ENCODE measurements at regions of chr20 and their contacts with region 1.

Region 1: GRCh38 chr20:8853805-8854338 is 215.0 kb upstream of the PLCB4 start:
- DNase-seq: peak in 1 of 2 donors; percentile 48
- ATAC-seq: peak; percentile 81 to 91 (median 84)
- H3K4me3 ChIP-seq: peak overlapping the region in 6 of 10 donors; percentile 4 to 37 (median 18)
- H3K27ac ChIP-seq: peak overlapping the region; percentile 7 to 77 (median 60)
- H3K4me1 ChIP-seq: peaks cover 0 to 34% (median 20%) of the 10 kb centered on the region in 9 donors
- H3K27me3 ChIP-seq: no peaks in the 10 kb centered on the region
- CTCF ChIP-seq: peak; percentile 83 to 93 (median 90)

Region 2: DNA sequence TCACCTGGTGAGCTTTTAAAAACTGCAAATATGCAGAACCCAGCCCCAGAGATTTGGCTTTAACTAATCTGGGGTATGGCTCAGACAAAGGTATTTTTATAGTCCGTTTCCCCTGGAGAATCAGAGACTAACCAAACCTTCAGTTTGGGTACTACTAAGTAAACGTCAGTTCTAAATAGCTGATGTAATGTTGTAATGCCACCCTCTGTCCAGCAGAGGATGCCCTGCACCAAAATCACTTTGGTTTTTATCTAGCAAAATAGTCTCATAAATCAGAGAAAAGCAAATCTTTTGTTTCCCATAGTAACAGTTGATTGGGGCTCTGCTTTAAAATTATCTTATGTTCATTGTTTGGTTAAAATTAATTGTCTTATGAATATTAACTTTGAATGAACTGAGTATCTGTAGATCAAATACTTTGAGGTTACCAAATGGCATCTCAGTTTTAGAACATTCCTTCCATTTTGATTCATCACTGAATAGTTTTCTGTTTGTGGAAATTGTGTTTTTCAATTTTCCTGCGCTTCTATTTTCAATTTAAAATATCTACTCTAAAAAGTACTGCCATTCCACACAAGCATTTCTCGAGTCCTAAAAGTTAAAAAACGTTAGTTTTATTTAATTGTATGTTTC is 63.3 kb before region 1 on chr20:
- intact Hi-C with region 1: loop called in 3 of 10 experiments (anchors 5 to 10 kb)
- DNase-seq: peak in 1 of 2 donors; percentile 19
- ATAC-seq: no peak
- H3K4me3 ChIP-seq: no peak overlapping the region
- H3K27ac ChIP-seq: no peak overlapping the region
- H3K4me1 ChIP-seq: peaks cover 0 to 10% (median 3%) of the 10 kb centered on the region in 9 donors
- H3K27me3 ChIP-seq: no peaks in the 10 kb centered on the region
- CTCF ChIP-seq: peak; percentile 91 to 98 (median 94)

Region 3: DNA sequence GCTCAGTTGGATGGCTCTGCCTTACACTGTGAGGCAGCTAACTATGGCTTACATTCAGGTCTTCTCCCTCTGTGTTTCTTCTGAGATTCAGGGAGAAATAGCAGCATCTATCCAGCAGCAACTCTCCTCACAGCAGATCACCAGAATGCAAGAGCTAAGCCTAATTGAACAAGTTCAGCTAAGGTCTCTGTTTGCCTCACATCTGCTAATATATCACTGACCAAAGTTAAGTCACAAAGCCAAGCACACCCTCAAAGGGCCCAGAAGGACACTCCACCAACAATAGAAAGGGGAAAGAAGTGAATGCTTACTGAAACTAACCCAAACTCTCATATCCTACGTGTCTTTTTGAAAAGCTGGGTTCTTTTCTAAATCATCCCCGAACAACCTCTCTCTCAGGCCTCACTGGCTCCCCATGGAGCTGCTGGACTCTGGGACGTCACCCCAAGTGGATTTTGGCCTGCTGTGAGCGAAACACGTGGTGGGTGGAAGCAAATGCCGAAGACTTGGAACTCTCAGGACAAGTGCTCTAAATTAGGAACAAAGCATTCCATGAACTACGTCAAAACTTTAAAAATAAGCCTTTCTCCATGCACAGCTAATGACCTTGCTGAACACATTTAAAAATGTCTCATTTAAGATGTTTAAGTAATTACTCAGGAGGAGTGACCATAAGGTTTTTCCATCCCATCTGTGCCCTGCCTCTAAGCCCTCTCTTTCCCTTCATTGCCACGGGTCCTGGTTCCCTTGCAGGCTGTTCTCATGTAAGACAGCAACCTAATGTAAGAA is 47.6 kb after region 1 on chr20:
- intact Hi-C with region 1: loop called in 1 of 10 experiments (anchors 1 kb)
- DNase-seq: peak; percentile 42 to 84
- ATAC-seq: peak; percentile 80 to 97 (median 94)
- H3K4me3 ChIP-seq: no peak overlapping the region
- H3K27ac ChIP-seq: peak overlapping the region; percentile 3 to 81 (median 68)
- H3K4me1 ChIP-seq: peaks cover 4 to 35% (median 19%) of the 10 kb centered on the region in 9 donors
- H3K27me3 ChIP-seq: no peaks in the 10 kb centered on the region
- CTCF ChIP-seq: no peak

Region 4: DNA sequence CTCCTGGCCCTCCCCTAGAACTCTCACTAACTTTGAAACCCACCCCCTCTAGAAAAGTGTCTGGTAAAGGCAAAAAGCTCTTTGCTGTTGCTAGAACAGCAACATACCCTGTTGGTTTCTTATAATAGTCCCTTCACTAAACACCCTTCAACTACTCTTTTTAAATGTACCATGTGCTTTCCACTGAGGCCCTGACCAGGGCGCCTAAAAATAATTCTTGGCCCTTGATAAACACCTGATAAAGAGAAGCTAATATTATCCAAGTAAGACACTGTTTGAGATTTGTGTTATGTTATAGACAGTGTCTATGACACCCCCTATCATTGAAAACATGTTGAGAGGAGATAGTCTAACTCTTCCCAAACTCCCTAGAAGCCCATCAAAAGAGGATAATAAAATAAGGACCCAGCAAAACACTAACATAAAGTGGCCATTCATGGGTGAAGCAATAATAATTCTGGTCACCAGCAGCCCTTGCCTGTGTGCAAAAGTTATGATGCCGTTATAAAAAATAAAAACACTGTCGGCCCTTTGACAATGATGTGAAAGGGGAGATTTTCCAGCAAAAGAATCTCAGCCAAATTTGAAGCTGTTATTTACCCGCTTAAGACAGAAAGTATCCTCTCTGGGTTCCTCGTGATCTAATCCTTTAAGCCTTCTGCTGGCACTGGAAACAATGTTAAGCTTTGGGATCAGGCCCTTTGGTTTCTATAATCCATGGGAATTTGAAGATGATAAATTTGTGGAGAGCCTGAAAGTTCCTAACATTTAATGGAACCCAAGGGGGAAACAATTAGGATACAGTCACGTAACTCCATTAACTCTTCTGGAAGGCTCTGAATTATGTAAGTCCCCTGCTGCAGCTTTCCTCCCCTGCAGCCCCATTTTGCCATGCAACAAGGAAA is 92.4 kb after region 1 on chr20:
- intact Hi-C with region 1: loop called in 2 of 10 experiments (anchors 5 kb)
- DNase-seq: no peak
- ATAC-seq: peak; percentile 47 to 86 (median 72)
- H3K4me3 ChIP-seq: no peak overlapping the region
- H3K27ac ChIP-seq: peak overlapping the region in 9 of 10 donors; percentile 0 to 75 (median 49)
- H3K4me1 ChIP-seq: peaks cover 2 to 42% (median 22%) of the 10 kb centered on the region in 9 donors
- H3K27me3 ChIP-seq: no peaks in the 10 kb centered on the region
- CTCF ChIP-seq: no peak

Region 5: GRCh38 chr20:9172851-9173250 is 319.0 kb after region 1 on chr20:
- intact Hi-C with region 1: loop called in 6 of 10 experiments (anchors 10 kb)
- DNase-seq: no peak
- ATAC-seq: peak; percentile 13 to 76 (median 58)
- H3K4me3 ChIP-seq: no peak overlapping the region
- H3K27ac ChIP-seq: peak overlapping the region in 2 of 10 donors; percentile 23 to 45
- H3K4me1 ChIP-seq: peaks cover 4 to 41% (median 24%) of the 10 kb centered on the region in 9 donors
- H3K27me3 ChIP-seq: no peaks in the 10 kb centered on the region
- CTCF ChIP-seq: peak in 8 of 9 donors; percentile 20 to 68 (median 44)

Region 6: GRCh38 chr20:9359561-9360308 is 505.9 kb after region 1 on chr20:
- intact Hi-C with region 1: loop called (anchors 2 to 10 kb)
- DNase-seq: peak; percentile 24 to 62
- ATAC-seq: peak; percentile 38 to 81 (median 70)
- H3K4me3 ChIP-seq: no peak overlapping the region
- H3K27ac ChIP-seq: peak overlapping the region in 5 of 10 donors; percentile 14 to 50 (median 17)
- H3K4me1 ChIP-seq: peaks cover 0 to 23% (median 10%) of the 10 kb centered on the region in 9 donors
- H3K27me3 ChIP-seq: no peaks in the 10 kb centered on the region
- CTCF ChIP-seq: peak; percentile 35 to 78 (median 61)